Heart left ventricle (tissue), 16 donors: ENCODE measurements at regions of chr5 and their contacts with region 1.

Region 1: GRCh38 chr5:32406650-32407049 is 37.9 kb downstream of the ZFR start:
- DNase-seq: no peak
- ATAC-seq: no peak
- H3K4me3 ChIP-seq: no peak overlapping the region
- H3K27ac ChIP-seq: no peak overlapping the region
- H3K4me1 ChIP-seq: peaks cover 0 to 17% (median 5%) of the 10 kb centered on the region in 12 donors
- H3K27me3 ChIP-seq: no peaks in the 10 kb centered on the region
- CTCF ChIP-seq: no peak
- POLR2A ChIP-seq: no peak

Region 2: GRCh38 chr5:32436553-32437242 is 30.0 kb after region 1 on chr5:
- intact Hi-C with region 1: loop called in 1 of 10 experiments (anchors 1 kb)
- DNase-seq: no peak
- ATAC-seq: peak in 1 of 4 donors; percentile 48
- H3K4me3 ChIP-seq: no peak overlapping the region
- H3K27ac ChIP-seq: no peak overlapping the region
- H3K4me1 ChIP-seq: peaks cover 0 to 69% (median 33%) of the 10 kb centered on the region in 12 donors
- H3K27me3 ChIP-seq: no peaks in the 10 kb centered on the region
- CTCF ChIP-seq: no peak
- POLR2A ChIP-seq: no peak

Region 3: GRCh38 chr5:32600057-32600622 is 193.5 kb after region 1 on chr5:
- intact Hi-C with region 1: loop called in 1 of 10 experiments (anchors 10 kb)
- DNase-seq: peak in 1 of 5 donors; percentile 17
- ATAC-seq: peak; percentile 50 to 83 (median 78)
- H3K4me3 ChIP-seq: no peak overlapping the region
- H3K27ac ChIP-seq: peak overlapping the region in 10 of 12 donors; percentile 8 to 52 (median 23)
- H3K4me1 ChIP-seq: peaks cover 0 to 61% (median 31%) of the 10 kb centered on the region in 12 donors
- H3K27me3 ChIP-seq: no peaks in the 10 kb centered on the region
- CTCF ChIP-seq: no peak
- POLR2A ChIP-seq: no peak